ENCODE measurements at regions of chr2 and their contacts with region 1.

Region 1: DNA sequence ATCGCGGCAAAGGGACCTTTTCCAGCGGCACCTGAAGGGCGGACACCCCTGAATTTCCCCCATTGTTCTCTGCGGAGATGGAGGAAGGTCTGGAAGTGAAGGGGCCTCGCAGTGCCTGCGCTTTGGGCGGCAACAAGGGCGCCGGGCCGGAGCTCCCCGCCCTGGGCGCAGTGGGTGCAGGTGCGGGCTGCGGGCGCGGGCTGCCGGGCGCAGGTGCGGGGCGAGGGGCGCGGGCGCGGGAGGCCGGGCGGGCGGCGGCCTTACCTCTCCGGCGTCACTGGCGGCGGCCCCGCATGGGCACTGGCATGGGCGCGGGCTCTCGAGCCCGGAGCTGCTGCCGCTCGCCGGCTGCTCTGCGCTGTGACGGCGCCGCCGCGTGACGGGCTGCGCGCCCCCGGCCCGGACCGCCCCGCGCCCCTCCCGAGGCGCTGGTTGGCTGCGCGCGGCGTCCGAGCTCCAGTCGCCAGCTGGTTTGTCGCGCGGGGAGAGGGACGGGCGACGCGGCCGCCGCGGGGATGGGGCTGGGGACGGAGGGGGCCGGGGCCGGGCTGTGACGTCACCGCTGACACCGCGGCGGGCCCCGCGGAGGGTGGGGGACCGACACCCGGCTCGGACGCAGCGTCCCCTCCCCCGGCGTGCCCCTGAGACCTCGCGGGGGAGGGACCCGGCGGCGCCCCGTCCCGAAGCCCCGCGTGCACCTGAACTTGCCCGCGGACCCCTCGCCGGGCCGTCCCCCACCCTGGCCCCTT is at the start of gene KIF1A:
- DNase-seq: no peak
- ATAC-seq: no peak
- H3K4me3 ChIP-seq: no peak within 1 kb of the TSS
- H3K27ac ChIP-seq: no peak within 1 kb of the TSS
- H3K4me1 ChIP-seq: no peaks in the 10 kb centered on the region
- H3K27me3 ChIP-seq: peaks cover 0 to 5% of the 10 kb centered on the region in 2 donors
- CTCF ChIP-seq: no peak
- POLR2A ChIP-seq: no peak
- total RNA-seq, gene KIF1A: 0.31 to 0.87 (median 0.56) TPM

Region 2: GRCh38 chr2:240499309-240500301 is 320.4 kb before region 1 on chr2:
- intact Hi-C with region 1: loop called in 1 of 2 experiments (anchors 10 kb)
- DNase-seq: peak in 1 of 3 donors; percentile 34
- ATAC-seq: peak in 1 of 4 donors; percentile 11
- H3K4me3 ChIP-seq: no peak overlapping the region
- H3K27ac ChIP-seq: no peak overlapping the region
- H3K4me1 ChIP-seq: no peaks in the 10 kb centered on the region
- H3K27me3 ChIP-seq: no peaks in the 10 kb centered on the region
- CTCF ChIP-seq: no peak
- POLR2A ChIP-seq: no peak